ENCODE measurements at regions of chr5 and their contacts with region 1.

Region 1: GRCh38 chr5:123561230-123561629 is 49.3 kb downstream of the CSNK1G3 start:
- DNase-seq: no peak
- H3K4me3 ChIP-seq: no peak overlapping the region
- H3K27ac ChIP-seq: no peak overlapping the region
- H3K4me1 ChIP-seq: peaks cover 0 to 2% (median 0%) of the 10 kb centered on the region in 4 experiments; a peak in 1 of 7 replicates
- H3K27me3 ChIP-seq: no peaks in the 10 kb centered on the region
- CTCF ChIP-seq: no peak
- EP300 ChIP-seq: no peak
- POLR2A ChIP-seq: no peak
- RAD21 ChIP-seq: no peak

Region 2: DNA sequence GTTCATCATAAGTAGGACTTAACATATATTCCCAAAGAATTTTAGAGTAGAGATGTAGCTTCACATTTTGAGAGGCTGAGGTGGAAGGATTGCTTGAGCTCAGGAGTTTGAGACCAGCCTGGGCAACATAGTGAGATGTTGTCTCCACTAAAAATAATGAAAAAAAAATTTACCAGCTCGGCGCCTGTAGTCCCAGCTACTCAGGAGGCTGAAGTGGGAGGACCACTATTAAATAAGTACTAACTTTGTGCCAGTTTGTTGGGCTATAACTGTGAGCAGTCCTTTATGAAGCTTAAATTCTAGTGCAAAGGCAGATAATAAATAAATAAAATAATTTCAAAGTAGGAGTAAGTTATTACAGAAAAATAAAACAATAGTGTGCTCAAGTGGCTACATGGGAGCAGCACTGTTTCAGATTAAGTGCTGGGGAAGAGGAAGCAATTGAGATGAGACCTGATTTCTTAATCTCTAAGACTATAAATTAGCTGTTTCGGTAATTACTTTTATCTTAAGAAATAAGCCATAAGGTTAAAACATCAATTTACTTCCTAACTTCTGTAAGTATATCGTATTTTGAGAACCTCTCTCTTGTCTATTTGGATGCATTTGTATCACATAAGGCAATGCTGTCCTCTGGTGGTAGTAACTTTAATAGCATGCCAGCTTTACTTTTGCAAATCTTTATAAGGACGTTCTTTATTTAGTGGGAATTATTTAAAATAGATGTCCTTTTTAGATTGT is 49.6 kb after region 1 on chr5:
- CTCF ChIA-PET with region 1: interaction called, 10 read pairs
- POLR2A ChIA-PET with region 1: no interaction called
- DNase-seq: no peak
- H3K4me3 ChIP-seq: no peak overlapping the region
- H3K27ac ChIP-seq: no peak overlapping the region
- H3K4me1 ChIP-seq: no peaks in the 10 kb centered on the region
- H3K27me3 ChIP-seq: no peaks in the 10 kb centered on the region
- CTCF ChIP-seq: peak in 2 of 3 experiments; percentile 35 to 76; a peak in 2 of 4 replicates
- EP300 ChIP-seq: no peak
- POLR2A ChIP-seq: no peak
- RAD21 ChIP-seq: peak; percentile 79 to 91

Measured in H1 (cell line).